Activated T-helper 2 cell treated with anti-CD3 and anti-CD28 coated beads, Interferon-gamma antibody, Interleukin-2, Interleukin-4, amounts not matched to agents 10 μg/mL and 5 μg/mL and 100 μg/mL, durations not matched to agents 14 hours and 24 hours and 36 hours (primary cell): ENCODE measurements at regions of chr1 and their contacts with region 1.

Region 1: GRCh38 chr1:93447516-93448291 is at the start of gene FNBP1L:
- DNase-seq: no peak
- H3K4me3 Mint-ChIP-seq: peak within 1 kb of the TSS; percentile 87
- H3K27ac Mint-ChIP-seq: no peak within 1 kb of the TSS
- H3K4me1 Mint-ChIP-seq: peaks cover 13% of the 10 kb centered on the region
- H3K27me3 Mint-ChIP-seq: peaks cover 59% of the 10 kb centered on the region
- total RNA-seq, gene FNBP1L: 0.32 and 0.37 TPM in 2 replicates

Region 2: GRCh38 chr1:93253521-93253920 is 194.2 kb before region 1 on chr1:
- intact Hi-C with region 1: no loop called
- DNase-seq: no peak
- H3K4me3 Mint-ChIP-seq: no peak overlapping the region
- H3K27ac Mint-ChIP-seq: no peak overlapping the region
- H3K4me1 Mint-ChIP-seq: peaks cover 4% of the 10 kb centered on the region
- H3K27me3 Mint-ChIP-seq: no peaks in the 10 kb centered on the region

Region 3: GRCh38 chr1:93615582-93616150 is 168.0 kb after region 1 on chr1:
- intact Hi-C with region 1: loop called (anchors 5 kb)
- DNase-seq: no peak
- H3K4me3 Mint-ChIP-seq: no peak overlapping the region
- H3K27ac Mint-ChIP-seq: peak overlapping the region; percentile 68
- H3K4me1 Mint-ChIP-seq: peaks cover 22% of the 10 kb centered on the region
- H3K27me3 Mint-ChIP-seq: peaks cover 29% of the 10 kb centered on the region